Activated T-helper 1 cell treated with anti-CD3 and anti-CD28 coated beads, Interleukin-12 subunit alpha, Interleukin-12 subunit beta, Interleukin-2, Interleukin-4 antibody, amounts not matched to agents 30 ng/mL and 10 ng/mL and 1 ng/mL, durations not matched to agents 14 hours and 24 hours and 36 hours (primary cell): ENCODE measurements at regions of chr16 and their contacts with region 1.

Region 1: GRCh38 chr16:1929578-1930337 is 11.5 kb upstream of the HS3ST6 start:
- DNase-seq: peak; percentile 91
- H3K4me3 Mint-ChIP-seq: no peak overlapping the region
- H3K27ac Mint-ChIP-seq: no peak overlapping the region
- H3K4me1 Mint-ChIP-seq: no peaks in the 10 kb centered on the region
- H3K27me3 Mint-ChIP-seq: peaks cover 2% of the 10 kb centered on the region

Region 2: GRCh38 chr16:1812732-1813163 is 117.0 kb before region 1 on chr16:
- intact Hi-C with region 1: loop called (anchors 5 kb)
- DNase-seq: peak; percentile 22
- H3K4me3 Mint-ChIP-seq: no peak overlapping the region
- H3K27ac Mint-ChIP-seq: no peak overlapping the region
- H3K4me1 Mint-ChIP-seq: peaks cover 8% of the 10 kb centered on the region
- H3K27me3 Mint-ChIP-seq: no peaks in the 10 kb centered on the region

Region 3: DNA sequence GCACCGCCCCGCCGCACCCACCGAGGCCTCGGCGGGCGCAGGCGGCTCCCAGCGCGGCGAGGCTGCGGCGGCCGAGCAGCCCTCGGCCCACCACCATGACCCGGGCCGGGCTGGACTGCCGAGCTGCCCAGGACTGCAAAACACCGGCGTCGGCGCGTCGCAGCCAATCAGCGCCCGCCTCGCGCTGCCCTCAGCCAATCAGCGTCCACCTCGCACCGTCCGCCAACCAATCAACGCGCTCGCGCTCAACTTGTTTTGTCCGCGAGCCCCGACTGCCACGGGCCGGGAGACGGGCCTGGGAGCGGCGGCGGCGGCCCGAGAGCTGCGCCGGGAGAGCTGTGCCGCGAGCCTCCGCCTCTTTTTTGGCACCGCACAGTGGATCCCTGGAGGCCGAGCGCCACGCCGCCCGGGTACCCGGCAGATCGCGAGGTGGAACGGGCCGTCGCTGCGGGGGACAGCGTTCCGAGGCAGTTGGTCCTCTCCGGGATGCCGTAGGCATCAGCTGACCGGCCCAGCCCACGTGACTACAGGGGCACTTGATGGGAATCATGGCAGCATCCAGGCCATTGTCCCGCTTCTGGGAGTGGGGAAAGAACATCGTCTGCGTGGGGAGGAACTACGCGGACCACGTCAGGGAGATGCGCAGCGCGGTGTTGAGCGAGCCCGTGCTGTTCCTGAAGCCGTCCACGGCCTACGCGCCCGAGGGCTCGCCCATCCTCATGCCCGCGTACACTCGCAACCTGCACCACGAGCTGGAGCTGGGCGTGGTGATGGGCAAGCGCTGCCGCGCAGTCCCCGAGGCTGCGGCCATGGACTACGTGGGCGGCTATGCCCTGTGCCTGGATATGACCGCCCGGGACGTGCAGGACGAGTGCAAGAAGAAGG is 102.8 kb before region 1 on chr16 and contains the starts of genes FAHD1 and HAGH:
- intact Hi-C with region 1: loop called (anchors 1 kb)
- DNase-seq: peak; percentile 91
- H3K4me3 Mint-ChIP-seq: peak within 1 kb of the TSS; percentile 92
- H3K27ac Mint-ChIP-seq: peak within 1 kb of the TSS; percentile 85
- H3K4me1 Mint-ChIP-seq: peaks cover 26% of the 10 kb centered on the region
- H3K27me3 Mint-ChIP-seq: no peaks in the 10 kb centered on the region
- total RNA-seq, gene FAHD1: 19.4 and 20.2 TPM in 2 replicates
- total RNA-seq, gene HAGH: 57.8 and 58.7 TPM in 2 replicates

Region 4: DNA sequence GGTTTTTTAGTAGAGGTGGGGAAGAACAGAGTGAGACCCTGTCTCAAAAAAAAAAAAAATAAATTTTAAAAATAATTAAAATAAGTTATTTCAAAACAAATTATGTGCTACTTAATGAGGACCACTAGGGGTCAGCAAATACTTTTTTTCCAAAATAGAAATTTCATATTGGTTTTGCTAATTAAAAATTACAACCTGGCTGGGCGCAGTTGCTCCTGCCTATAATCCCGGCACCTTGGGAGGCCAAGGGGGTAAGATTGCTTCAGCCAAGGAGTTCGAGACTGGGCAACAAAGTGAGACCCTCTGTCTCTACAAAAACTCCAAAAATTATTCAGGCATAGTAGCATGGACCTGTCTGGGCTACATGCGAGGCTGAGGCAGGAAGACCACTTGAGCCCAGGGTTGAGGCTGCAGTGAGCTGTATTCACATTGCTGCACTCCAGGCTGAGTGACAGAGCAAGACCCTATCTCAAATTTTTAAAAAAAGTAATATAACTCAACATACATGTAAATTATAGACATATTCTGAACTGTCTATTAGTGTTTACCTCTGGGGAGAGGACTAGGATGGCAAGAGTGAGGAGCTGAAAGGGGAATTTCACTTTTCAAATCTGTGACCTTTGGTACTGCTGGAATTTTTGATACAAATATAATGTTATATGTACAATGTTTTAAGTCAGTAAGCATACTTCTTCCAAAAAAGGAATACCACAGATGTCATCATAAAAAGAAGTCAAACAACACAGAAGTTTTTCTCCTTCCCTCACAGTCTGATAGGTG is 65.9 kb before region 1 on chr16:
- intact Hi-C with region 1: loop called (anchors 1 kb)
- DNase-seq: no peak
- H3K4me3 Mint-ChIP-seq: no peak overlapping the region
- H3K27ac Mint-ChIP-seq: no peak overlapping the region
- H3K4me1 Mint-ChIP-seq: no peaks in the 10 kb centered on the region
- H3K27me3 Mint-ChIP-seq: peaks cover 37% of the 10 kb centered on the region

Region 5: DNA sequence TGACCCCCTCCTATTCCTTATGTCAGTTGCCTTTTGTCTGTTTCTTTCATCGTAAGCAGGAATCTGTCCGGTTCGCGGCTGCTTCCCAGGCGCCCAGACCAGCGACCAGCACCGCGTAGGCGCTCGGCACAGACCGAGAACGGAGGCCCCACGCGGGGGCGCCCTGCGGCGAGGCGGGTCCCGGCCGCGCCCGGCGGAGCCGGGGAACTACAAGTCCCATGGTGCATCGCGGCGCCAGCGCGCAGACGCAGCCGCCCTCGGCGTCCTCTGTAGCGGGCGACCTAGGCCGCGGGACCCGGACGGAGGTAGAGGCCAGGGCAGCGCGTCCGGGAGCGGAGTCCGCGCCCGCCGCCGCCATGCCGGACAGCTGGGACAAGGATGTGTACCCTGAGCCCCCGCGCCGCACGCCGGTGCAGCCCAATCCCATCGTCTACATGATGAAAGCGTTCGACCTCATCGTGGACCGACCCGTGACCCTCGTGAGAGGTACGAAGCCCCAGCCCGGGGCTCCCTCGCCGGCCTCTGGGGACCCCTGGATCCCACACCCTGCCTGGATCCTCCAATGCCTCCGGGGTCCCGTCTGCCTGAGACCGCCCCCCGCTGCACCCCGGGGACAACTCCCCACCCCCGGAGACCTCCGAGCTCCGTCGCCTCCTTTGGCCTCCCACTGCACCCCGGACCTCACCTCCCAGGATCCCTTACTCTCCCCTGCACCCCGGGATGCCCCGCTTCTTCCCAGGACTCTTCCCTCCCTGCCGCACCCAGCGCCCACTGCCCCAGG is 29.7 kb after region 1 on chr16 and contains the start of gene NDUFB10:
- intact Hi-C with region 1: loop called (anchors 1 kb)
- DNase-seq: peak; percentile 93
- H3K4me3 Mint-ChIP-seq: peak within 1 kb of the TSS; percentile 97
- H3K27ac Mint-ChIP-seq: peak within 1 kb of the TSS; percentile 90
- H3K4me1 Mint-ChIP-seq: peaks cover 34% of the 10 kb centered on the region
- H3K27me3 Mint-ChIP-seq: no peaks in the 10 kb centered on the region
- total RNA-seq, gene NDUFB10: 134 and 138 TPM in 2 replicates

Region 6: GRCh38 chr16:1964506-1965395 is 35.0 kb after region 1 on chr16 and contains the start of gene RPS2:
- intact Hi-C with region 1: loop called (anchors 1 kb)
- DNase-seq: peak; percentile 99
- H3K4me3 Mint-ChIP-seq: peak within 1 kb of the TSS; percentile 100
- H3K27ac Mint-ChIP-seq: peak within 1 kb of the TSS; percentile 97
- H3K4me1 Mint-ChIP-seq: peaks cover 34% of the 10 kb centered on the region
- H3K27me3 Mint-ChIP-seq: no peaks in the 10 kb centered on the region
- total RNA-seq, gene RPS2: 3,144 and 3,145 TPM in 2 replicates

Region 7: GRCh38 chr16:2194852-2195321 is 265.1 kb after region 1 on chr16:
- intact Hi-C with region 1: no loop called
- DNase-seq: peak; percentile 25
- H3K4me3 Mint-ChIP-seq: peak overlapping the region; percentile 15
- H3K27ac Mint-ChIP-seq: no peak overlapping the region
- H3K4me1 Mint-ChIP-seq: no peaks in the 10 kb centered on the region
- H3K27me3 Mint-ChIP-seq: peaks cover 32% of the 10 kb centered on the region